MCF 10A (cell line): ENCODE measurements at regions of chr1 and their contacts with region 1.

Region 1: GRCh38 chr1:153192697-153193096 is 10.5 kb upstream of the LELP1 start:
- DNase-seq: peak; percentile 77
- H3K4me3 Mint-ChIP-seq: no peak overlapping the region
- H3K27ac Mint-ChIP-seq: no peak overlapping the region
- H3K4me1 Mint-ChIP-seq: peaks cover 8% of the 10 kb centered on the region
- H3K27me3 Mint-ChIP-seq: peaks cover 27% of the 10 kb centered on the region
- CTCF ChIP-seq: peak; percentile 98

Region 2: DNA sequence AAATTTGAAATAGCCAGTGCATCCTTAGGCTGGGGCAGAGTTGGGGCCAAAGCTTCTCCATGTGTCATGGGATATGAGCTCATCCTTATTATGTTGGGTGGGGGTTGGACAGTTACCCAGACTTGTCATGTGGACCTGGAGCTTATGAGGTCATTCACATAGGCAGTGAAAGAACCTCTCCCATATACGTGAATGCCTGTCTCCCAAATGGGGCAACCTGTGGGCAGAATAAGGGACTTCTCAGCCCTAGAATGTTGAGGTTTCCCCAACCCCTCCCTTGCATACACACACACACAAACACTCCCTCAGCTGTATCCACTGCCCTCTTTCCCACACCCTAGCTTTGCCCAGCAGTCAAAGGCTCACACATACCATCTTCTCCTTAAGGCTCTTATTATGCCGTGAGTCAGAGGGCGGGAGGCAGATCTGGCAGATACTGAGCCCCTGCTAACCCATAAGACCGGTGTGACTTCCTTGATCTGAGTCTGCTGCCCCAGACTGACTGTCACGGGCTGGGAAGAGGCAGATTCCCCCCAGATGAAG is 286.6 kb before region 1 on chr1:
- CTCF ChIA-PET with region 1: interaction called, 42 read pairs
- POLR2A ChIA-PET with region 1: interaction called, 3 read pairs
- intact Hi-C with region 1: no loop called
- DNase-seq: peak; percentile 81
- H3K4me3 Mint-ChIP-seq: no peak overlapping the region
- H3K27ac Mint-ChIP-seq: peak overlapping the region; percentile 89
- H3K4me1 Mint-ChIP-seq: peaks cover 28% of the 10 kb centered on the region
- H3K27me3 Mint-ChIP-seq: no peaks in the 10 kb centered on the region
- CTCF ChIP-seq: no peak

Region 3: DNA sequence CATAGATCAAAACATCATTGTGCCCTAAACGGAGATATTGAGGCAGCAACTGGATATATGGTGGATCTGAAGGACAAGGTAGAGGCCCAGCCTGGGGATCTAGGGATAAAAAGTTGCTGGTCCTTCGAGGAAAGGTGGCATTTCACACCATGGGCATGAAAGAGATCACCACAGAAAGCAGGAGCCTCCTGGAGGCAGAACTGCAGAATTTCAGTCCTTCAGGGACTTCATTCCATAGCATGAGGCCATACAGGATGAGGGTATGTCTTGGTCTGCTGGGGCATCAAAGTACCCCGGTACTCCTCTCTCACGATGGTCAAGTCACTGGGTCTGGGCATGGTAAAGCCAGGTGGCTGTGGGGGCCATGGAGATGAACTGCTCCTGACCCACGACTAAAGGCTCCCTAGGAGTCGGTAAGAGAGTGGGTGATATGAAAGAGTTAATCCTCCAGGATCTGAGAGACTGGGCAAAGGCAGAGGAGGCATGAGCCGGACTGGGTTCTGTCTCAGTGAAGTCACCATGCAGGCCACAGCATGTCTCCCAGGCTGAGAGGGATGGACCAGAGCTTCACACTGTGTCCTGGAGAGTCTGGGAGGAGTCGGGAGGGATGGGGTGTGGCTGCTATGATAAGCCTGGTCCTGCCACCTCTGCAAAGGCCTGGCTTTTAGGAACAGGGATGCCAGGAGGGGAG is 251.5 kb before region 1 on chr1:
- CTCF ChIA-PET with region 1: interaction called, 27 read pairs
- POLR2A ChIA-PET with region 1: no interaction called
- intact Hi-C with region 1: no loop called
- DNase-seq: peak; percentile 75
- H3K4me3 Mint-ChIP-seq: no peak overlapping the region
- H3K27ac Mint-ChIP-seq: no peak overlapping the region
- H3K4me1 Mint-ChIP-seq: peaks cover 20% of the 10 kb centered on the region
- H3K27me3 Mint-ChIP-seq: no peaks in the 10 kb centered on the region
- CTCF ChIP-seq: no peak

Region 4: DNA sequence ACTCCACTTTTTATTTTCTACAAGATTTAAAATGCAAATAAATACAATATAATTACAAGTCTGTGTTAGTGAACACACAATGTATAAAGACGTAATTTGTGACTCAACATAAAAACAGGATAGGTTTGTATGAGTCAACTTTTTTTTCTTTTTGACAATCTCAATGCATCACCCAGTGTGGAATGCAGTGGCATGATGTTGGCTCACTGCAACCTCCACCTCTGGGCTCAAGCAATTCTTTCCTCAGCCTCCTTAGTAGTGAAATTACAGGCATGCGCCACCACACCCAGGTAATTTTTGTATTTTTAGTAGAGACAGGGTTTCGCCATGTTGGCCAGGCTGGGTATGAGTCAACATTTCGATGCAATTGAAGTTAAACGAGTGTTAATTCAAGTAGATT is 92.5 kb before region 1 on chr1:
- CTCF ChIA-PET with region 1: interaction called, 3 read pairs
- POLR2A ChIA-PET with region 1: no interaction called
- intact Hi-C with region 1: loop called (anchors 2 kb)
- DNase-seq: peak; percentile 97
- H3K4me3 Mint-ChIP-seq: no peak overlapping the region
- H3K27ac Mint-ChIP-seq: peak overlapping the region; percentile 82
- H3K4me1 Mint-ChIP-seq: peaks cover 33% of the 10 kb centered on the region
- H3K27me3 Mint-ChIP-seq: no peaks in the 10 kb centered on the region
- CTCF ChIP-seq: no peak

Region 5: GRCh38 chr1:153210206-153210605 is 17.5 kb after region 1 on chr1:
- CTCF ChIA-PET with region 1: interaction called, 20 read pairs
- POLR2A ChIA-PET with region 1: no interaction called
- intact Hi-C with region 1: no loop called
- DNase-seq: no peak
- H3K4me3 Mint-ChIP-seq: no peak overlapping the region
- H3K27ac Mint-ChIP-seq: no peak overlapping the region
- H3K4me1 Mint-ChIP-seq: no peaks in the 10 kb centered on the region
- H3K27me3 Mint-ChIP-seq: peaks cover 22% of the 10 kb centered on the region
- CTCF ChIP-seq: no peak